ENCODE measurements at regions of chr17 and their contacts with region 1.

Region 1: DNA sequence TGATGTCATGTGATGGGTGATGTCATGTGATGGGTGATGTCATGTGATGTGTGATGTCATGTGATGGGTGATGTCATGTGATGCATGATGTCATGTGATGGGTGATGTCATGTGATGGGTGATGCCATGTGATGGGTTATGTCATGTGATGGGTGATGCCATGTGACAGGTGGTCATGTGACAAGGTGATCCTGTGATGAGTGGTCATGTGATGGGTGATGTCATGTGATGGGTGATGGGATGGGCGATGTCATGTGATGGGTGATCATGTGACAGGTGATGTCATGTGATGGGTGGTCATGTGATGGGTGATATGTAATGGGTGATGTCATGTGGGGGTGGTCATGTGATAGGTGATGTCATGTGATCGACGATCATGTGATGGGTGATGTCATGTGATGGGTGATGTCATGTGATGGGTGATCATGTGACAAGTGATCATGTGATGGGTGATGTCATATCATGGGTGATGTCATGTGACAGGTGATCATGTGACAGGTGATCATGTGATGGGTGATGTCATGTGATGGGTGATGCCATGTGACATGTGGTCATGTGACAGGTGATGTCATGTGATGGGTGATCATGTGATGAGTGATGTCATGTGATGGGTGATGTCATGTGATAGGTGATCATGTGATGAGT is 17.2 kb downstream of the CD300LB start:
- DNase-seq: peak; percentile 90
- H3K4me3 Mint-ChIP-seq: peak overlapping the region; percentile 34
- H3K27ac Mint-ChIP-seq: peak overlapping the region; percentile 94
- H3K4me1 Mint-ChIP-seq: peaks cover 27% of the 10 kb centered on the region
- H3K27me3 Mint-ChIP-seq: peaks cover 14% of the 10 kb centered on the region

Region 2: DNA sequence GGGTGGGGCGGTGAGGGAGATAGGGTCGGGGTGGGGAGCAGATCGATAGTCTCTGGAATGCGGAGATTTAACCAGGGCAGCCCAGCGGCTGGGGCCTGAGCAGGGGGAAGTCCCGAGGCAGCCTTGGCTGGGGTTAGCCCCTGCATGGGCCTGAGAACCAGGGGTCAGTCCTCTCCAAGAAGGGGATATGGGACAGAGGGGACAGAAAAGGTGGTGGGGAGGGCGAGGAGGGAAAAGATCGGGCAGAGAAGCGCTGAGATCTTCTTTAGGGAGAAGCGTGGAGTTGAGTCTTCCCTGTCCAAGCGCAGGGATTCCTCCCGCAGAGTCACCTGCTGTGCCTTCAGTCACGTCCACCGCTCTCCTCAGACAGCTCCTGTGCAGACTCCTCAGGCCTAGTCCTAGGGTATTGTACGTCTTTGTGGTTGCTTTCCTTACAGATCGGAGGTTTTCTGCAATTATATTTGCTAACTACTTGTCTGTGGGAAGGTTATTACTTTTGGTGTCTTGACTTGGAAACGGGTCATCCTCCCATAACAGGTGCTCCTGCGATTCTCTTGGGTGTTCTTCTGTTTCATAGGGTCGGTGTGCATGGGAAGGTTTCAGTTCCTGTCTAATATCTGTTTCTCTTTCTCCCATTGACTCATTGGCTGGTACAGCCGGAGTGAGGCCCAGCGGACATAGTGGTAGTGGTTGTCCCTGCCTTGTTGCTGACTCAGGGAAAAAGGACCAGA is 46.7 kb before region 1 on chr17:
- intact Hi-C with region 1: loop called (anchors 2 kb)
- DNase-seq: peak; percentile 73
- H3K4me3 Mint-ChIP-seq: no peak overlapping the region
- H3K27ac Mint-ChIP-seq: peak overlapping the region; percentile 73
- H3K4me1 Mint-ChIP-seq: peaks cover 48% of the 10 kb centered on the region
- H3K27me3 Mint-ChIP-seq: no peaks in the 10 kb centered on the region

Measured in activated CD4-positive, alpha-beta T cell treated with anti-CD3 and anti-CD28 coated beads, Interleukin-2, amount 10 ng/mL, durations not matched to agents 24 days and 14 days (primary cell).